Activated CD4-positive, alpha-beta T cell treated with anti-CD3 and anti-CD28 coated beads, Interleukin-2, amount 10 ng/mL, durations not matched to agents 7 days and 5 days (primary cell): ENCODE measurements at regions of chr12 and their contacts with region 1.

Region 1: DNA sequence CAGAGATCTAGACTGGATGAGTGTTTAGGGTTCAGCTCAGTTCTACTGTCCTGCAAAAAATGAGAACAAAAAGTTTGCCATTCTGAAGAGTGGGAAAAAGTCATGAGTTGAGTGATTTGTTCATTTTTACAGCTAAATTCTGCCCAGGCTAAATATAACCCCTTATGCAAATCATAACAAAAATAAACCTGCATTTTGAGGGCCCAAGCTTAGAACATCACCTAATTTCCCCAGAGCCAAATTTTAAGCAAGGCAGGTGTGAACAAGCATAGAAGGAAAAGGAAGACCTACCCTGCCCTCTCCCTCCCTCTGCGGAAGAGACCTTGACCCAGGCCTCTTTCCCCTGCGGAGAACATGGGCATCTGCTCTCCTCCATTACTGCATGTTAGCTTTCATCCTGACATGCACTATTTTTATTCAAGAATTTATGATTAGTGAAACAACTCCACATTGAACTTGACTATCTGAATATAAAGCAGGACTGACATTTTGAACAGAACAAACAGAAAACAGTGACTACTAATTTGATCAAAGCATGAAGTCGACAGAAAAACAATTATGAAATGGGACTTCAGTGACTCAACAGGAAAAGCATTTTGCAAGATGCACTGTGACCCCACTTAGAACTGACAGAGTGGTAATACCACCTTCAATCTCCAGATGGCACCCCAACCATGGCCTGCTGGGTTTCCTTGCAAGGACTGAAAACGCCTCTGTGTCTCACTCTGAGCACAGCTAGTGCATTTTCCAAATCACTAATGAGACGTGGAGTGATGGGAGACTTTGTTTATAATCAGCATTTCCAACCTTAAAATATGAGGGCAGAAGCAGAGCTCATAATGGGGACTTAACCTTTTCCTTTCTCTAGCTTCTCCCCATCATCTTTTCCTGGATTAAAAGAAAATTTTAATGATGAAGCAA is 30.9 kb upstream of the SELPLG start:
- DNase-seq: peak; percentile 89
- H3K4me3 Mint-ChIP-seq: no peak overlapping the region
- H3K27ac Mint-ChIP-seq: peak overlapping the region; percentile 83
- H3K4me1 Mint-ChIP-seq: peaks cover 25% of the 10 kb centered on the region
- H3K27me3 Mint-ChIP-seq: no peaks in the 10 kb centered on the region

Region 2: DNA sequence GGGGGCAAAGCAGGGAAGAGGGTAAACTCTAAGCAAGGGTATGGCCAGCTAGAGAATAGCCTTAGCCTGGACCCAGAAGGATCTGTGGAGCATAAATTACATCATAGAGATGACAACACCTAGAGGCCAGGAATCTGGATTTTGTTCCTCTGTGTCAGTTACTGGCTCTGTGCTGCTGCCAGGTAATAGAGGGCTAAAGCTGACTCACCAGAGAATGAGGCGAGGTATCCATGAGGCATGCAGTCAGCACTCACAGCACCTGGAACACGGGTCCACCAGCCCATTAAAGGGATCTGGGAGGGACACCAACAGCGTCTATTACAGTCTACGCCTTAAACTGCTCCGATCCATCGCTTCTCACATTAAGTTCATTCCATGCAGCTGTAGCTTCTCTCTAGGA is 250.6 kb before region 1 on chr12:
- CTCF ChIA-PET with region 1: no interaction called
- POLR2A ChIA-PET with region 1: no interaction called
- DNase-seq: no peak
- H3K4me3 Mint-ChIP-seq: no peak overlapping the region
- H3K27ac Mint-ChIP-seq: no peak overlapping the region
- H3K4me1 Mint-ChIP-seq: no peaks in the 10 kb centered on the region
- H3K27me3 Mint-ChIP-seq: peaks cover 11% of the 10 kb centered on the region

Region 3: DNA sequence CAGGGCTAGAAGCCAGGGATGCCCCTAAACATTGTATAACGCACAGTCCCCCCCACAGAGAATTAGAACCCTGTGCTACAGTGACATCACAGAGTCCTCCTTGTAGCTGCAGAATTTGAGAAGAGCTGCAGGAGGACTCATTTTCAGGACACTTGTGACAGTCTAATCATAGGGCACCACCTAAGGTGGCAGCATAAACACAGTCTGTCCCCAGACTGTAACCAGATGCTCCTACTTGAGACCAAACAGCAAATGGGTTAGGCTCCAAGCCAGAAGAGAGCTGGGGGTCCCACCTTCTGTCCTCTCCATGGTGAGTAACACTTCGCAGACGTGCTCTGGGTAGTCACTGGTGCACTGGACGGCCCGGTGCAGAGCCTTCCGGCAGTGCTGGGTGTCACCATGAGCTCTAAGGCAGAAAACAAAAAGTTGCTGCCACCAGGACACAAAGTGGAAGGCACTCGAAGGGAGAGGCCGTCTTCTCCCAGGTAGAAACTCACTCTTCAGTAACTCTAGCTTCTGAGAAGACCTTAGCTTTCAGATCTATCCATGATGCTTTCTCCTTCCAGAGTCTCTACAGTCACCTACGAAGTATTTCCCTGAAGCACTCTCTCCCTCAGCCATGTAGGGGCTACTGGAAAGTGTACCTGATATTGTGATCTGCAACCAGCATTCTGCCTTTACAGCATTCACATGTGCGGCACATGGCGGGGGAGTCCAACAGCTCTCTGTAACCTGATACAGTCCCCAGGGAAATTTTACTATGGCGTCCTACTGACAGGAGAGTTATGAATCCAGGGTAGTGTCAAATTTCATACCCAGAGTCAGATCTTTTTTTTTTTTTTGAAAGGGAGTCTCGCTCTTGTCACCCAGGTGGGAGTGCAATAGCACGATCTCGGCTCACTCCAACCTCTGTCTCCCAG is 132.4 kb before region 1 on chr12:
- CTCF ChIA-PET with region 1: no interaction called
- POLR2A ChIA-PET with region 1: no interaction called
- DNase-seq: no peak
- H3K4me3 Mint-ChIP-seq: no peak overlapping the region
- H3K27ac Mint-ChIP-seq: no peak overlapping the region
- H3K4me1 Mint-ChIP-seq: peaks cover 7% of the 10 kb centered on the region
- H3K27me3 Mint-ChIP-seq: no peaks in the 10 kb centered on the region

Region 4: DNA sequence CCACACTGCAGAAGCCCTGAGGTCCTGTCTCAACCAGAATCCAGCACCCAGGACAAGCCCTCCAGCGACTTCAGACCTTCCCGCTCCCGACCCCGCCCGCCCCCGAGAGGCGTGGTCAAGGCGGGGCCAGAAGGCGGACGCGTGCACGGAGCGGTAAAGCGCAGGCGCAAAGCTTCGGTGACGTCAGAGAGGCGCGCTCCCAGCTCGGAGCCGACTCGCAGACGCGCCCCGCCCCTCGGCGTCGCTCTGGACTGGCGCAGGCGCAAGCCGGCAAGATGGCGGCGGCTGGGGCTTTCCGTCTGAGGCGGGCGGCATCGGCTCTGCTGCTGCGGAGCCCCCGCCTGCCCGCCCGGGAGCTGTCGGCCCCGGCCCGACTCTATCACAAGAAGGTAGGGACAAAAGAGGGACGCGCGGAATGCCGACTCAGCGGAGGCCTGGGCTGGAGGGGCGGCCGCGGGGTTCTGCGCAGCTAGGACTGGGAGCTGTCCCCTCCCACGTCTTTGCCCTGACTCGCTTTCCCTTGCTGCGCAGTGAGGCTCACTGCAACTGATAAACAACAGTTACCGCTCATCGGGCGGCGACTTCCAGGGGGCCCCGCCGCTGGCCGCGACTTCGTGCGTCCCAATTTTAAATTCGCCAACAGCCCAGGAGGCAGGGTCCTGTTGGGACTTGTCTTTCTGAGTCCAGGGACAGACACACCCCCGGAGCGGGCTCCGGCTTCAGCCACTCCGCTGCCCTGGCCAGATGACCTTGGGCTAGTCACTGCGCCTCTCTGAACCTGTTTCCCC is 102.1 kb before region 1 on chr12 and contains the start of gene ISCU:
- CTCF ChIA-PET with region 1: interaction called, 14 read pairs
- POLR2A ChIA-PET with region 1: no interaction called
- DNase-seq: peak; percentile 98
- H3K4me3 Mint-ChIP-seq: peak within 1 kb of the TSS; percentile 100
- H3K27ac Mint-ChIP-seq: peak within 1 kb of the TSS; percentile 99
- H3K4me1 Mint-ChIP-seq: peaks cover 65% of the 10 kb centered on the region
- H3K27me3 Mint-ChIP-seq: no peaks in the 10 kb centered on the region
- total RNA-seq, gene ISCU: 60.8 to 66.0 TPM

Region 5: DNA sequence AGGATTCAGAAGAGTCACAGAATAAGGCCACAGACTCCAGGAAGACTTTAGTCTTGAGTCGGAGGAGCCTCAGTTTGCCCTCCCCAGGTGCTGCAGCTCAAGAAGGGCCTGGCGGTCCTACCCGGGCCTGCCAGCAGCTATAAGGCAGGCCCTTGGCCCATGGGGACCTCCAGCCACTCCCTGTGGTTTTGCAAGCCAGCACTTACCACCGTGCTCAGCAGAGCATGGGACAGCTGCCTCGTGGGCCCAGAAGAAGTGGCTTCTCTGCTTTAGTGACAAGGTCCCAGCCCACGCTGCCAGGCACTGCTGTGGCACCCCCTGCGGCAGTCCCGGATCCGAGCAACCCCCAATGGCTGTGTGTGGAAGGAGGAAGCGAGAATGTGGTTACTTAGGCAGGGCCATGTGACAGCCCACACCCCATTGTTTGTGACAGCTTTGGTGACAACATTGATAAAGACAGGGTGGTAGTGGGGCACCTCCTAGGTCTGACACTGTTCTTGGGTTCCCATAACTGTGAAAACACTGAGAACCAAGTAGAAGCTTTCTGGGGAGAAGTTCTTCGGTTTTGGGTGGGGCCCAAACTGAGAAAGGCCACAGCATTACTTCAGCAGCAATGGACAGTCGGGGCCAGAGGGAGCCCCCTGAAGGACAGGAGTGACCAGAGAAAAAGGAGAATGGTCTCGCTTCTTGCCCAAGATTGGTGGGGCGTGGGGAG is 30.9 kb before region 1 on chr12 and contains the start of gene SELPLG:
- CTCF ChIA-PET with region 1: interaction called, 14 read pairs
- POLR2A ChIA-PET with region 1: interaction called, 3 read pairs
- DNase-seq: peak; percentile 94
- H3K4me3 Mint-ChIP-seq: peak within 1 kb of the TSS; percentile 98
- H3K27ac Mint-ChIP-seq: peak within 1 kb of the TSS; percentile 100
- H3K4me1 Mint-ChIP-seq: peaks cover 53% of the 10 kb centered on the region
- H3K27me3 Mint-ChIP-seq: no peaks in the 10 kb centered on the region
- total RNA-seq, gene SELPLG: 207 to 214 TPM

Region 6: GRCh38 chr12:108691175-108691997 is 26.8 kb after region 1 on chr12:
- CTCF ChIA-PET with region 1: interaction called, 17 read pairs
- POLR2A ChIA-PET with region 1: no interaction called
- DNase-seq: peak; percentile 70
- H3K4me3 Mint-ChIP-seq: peak overlapping the region; percentile 53
- H3K27ac Mint-ChIP-seq: peak overlapping the region; percentile 91
- H3K4me1 Mint-ChIP-seq: peaks cover 74% of the 10 kb centered on the region
- H3K27me3 Mint-ChIP-seq: no peaks in the 10 kb centered on the region

Region 7: DNA sequence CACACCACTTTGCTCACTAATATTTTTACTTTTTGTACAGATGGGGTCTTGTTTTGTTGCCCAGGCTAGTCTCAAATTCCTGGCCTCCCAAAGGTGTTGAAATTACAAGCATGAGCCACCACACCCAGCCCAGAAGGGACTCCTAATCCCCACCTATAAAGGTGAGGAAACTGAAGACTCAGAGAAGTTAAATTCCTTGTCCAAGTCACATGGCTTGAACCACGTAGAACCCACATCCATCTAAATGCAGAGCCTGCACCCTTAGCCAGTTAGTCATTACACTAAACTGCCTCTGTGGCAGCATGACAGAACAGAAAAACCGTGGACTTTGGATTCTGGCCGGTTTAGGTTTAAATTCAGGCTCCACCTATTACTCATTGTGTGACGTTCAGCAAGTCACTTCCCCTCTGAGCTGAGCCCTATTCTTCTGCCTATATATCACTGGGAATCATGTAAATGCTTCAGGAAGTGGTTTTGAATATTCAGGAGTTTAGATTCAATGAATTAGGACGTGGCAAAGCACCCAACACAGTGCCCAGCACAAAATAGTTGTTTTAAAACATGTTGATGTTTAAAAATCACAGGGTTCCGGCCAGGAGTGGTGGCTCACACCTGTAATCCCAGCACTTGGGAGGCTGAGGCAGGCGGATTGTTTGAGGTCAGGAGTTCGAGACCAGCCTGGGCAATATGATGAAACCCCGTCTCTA is 69.8 kb after region 1 on chr12:
- CTCF ChIA-PET with region 1: interaction called, 11 read pairs
- POLR2A ChIA-PET with region 1: no interaction called
- DNase-seq: peak; percentile 10
- H3K4me3 Mint-ChIP-seq: no peak overlapping the region
- H3K27ac Mint-ChIP-seq: peak overlapping the region; percentile 42
- H3K4me1 Mint-ChIP-seq: peaks cover 37% of the 10 kb centered on the region
- H3K27me3 Mint-ChIP-seq: no peaks in the 10 kb centered on the region

Region 8: DNA sequence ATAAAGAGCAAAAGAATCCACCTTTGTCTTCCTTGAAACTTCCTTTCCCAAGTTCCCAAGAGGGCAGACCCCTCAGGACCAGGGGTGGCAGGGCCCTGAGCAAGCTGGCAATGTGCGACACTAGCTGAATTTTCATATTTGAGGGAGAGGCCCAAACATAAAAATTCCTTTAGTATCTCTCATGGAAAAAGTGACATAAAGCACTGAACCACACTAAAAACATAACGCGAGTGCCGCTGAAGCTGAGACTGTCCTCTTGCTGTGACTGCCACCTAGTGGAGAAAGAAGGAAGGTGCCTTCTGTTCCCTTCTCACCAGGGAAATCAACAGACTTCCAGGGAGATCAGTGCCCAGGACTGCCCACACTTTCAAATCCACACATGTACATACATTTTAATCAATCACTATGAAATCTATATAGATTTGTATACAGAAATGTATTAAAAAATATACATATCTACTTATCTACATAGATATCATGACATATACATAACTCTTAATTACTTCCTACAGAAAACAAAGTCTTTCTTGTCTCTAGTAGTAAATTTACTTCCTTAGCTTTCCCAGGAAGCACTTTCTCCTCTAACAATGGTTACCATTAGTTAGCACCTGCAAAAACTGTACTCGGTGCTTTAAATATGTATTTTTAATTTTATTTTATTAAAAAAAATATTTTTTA is 139.0 kb after region 1 on chr12:
- CTCF ChIA-PET with region 1: interaction called, 21 read pairs
- POLR2A ChIA-PET with region 1: no interaction called
- DNase-seq: peak; percentile 81
- H3K4me3 Mint-ChIP-seq: no peak overlapping the region
- H3K27ac Mint-ChIP-seq: peak overlapping the region; percentile 57
- H3K4me1 Mint-ChIP-seq: peaks cover 6% of the 10 kb centered on the region
- H3K27me3 Mint-ChIP-seq: no peaks in the 10 kb centered on the region